ENCODE measurements at regions of chr14 and their contacts with region 1.

Region 1: GRCh38 chr14:61694830-61695694 is at the start of gene HIF1A:
- DNase-seq: peak; percentile 97 to 99 (median 98)
- ATAC-seq: peak; percentile 97 to 99 (median 98)
- H3K4me3 ChIP-seq: peak within 1 kb of the TSS; percentile 65 to 95 (median 89)
- H3K27ac ChIP-seq: peak within 1 kb of the TSS; percentile 93 to 99 (median 97)
- H3K4me1 ChIP-seq: peaks cover 0 to 39% (median 23%) of the 10 kb centered on the region in 12 donors
- H3K27me3 ChIP-seq: no peaks in the 10 kb centered on the region
- CTCF ChIP-seq: peak in 2 of 12 donors; percentile 23 to 24
- POLR2A ChIP-seq: peak; percentile 92 to 95
- total RNA-seq, gene HIF1A: 52.4 to 157 (median 72.8) TPM

Region 2: DNA sequence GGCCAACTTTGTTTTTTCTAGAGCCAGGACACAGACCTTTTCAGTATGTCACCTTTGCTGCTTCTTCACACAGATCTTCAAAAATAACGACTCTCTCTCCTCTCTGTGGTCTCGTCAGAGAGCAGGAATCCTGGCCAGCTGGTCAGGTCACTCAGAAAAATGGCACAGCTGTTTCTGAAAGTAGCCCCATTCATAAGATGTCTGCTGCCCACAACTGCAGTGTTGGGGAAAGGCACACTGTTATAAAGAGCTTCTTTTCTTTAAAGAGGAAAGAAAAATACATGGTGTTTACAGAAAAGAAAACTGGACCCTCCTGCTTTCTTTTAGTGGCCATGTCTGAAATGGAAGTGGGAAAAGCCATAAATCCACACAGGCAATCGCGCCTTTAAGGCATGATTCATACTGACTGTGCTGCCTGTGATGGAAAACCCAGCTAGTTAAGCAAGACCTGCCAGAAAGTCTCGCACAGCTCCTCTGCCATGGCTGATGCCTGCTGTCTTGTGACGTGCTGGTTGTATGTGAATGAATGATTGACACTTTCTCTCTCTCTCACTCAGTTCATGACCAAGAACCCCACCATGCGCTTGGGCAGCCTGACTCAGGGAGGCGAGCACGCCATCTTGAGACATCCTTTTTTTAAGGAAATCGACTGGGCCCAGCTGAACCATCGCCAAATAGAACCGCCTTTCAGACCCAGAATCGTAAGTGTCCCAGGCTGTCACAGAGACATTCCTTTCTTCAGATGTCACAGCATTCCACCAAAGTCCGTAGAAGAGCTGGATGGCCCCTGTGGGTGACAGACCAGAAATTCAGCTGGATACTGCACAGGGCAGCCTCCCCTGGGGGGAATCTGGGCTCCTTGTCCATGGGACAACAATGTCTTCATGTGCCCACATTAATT is 147.6 kb before region 1 on chr14:
- intact Hi-C with region 1: no loop called
- DNase-seq: peak in 1 of 5 donors; percentile 40
- ATAC-seq: peak in 1 of 4 donors; percentile 32
- H3K4me3 ChIP-seq: no peak overlapping the region
- H3K27ac ChIP-seq: peak overlapping the region in 4 of 12 donors; percentile 1 to 48 (median 43)
- H3K4me1 ChIP-seq: peaks cover 6 to 84% (median 47%) of the 10 kb centered on the region in 12 donors
- H3K27me3 ChIP-seq: no peaks in the 10 kb centered on the region
- CTCF ChIP-seq: no peak
- POLR2A ChIP-seq: no peak

Region 3: DNA sequence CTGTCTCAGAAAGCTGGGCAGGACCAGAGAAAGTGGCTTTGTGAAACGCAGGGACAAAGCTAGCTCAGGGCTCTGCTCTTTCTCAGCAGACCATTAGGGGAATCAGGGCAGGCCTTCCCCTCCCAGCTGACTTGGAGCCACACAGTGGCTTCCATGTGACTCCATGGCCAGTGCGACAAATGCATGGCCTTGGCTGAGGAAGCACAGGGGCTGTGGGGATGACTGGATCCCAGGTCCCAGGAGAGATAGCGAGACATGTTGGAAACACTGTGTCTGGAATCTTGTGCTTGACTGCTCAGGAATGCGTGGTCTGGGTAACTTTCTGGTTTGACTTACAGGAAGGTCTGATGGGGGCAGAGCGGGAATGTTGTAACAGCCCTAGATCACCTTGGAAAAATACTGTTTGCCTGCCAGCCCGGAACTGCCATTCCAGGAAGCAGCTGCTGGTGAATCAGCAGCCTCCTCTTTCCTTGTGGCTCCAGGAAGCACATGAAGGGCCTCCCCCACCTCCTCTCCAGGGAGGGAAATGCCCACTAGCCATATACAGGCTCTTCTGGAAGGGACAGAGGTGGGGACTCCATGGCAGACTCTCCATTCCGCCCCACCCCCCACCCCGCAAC is 133.3 kb before region 1 on chr14:
- intact Hi-C with region 1: loop called in 5 of 10 experiments (anchors 5 to 10 kb)
- DNase-seq: peak; percentile 66 to 87 (median 73)
- ATAC-seq: peak; percentile 52 to 90 (median 80)
- H3K4me3 ChIP-seq: no peak overlapping the region
- H3K27ac ChIP-seq: peak overlapping the region; percentile 31 to 94 (median 76)
- H3K4me1 ChIP-seq: peaks cover 2 to 67% (median 32%) of the 10 kb centered on the region in 12 donors
- H3K27me3 ChIP-seq: no peaks in the 10 kb centered on the region
- CTCF ChIP-seq: peak in 1 of 12 donors; percentile 7
- POLR2A ChIP-seq: no peak

Region 4: DNA sequence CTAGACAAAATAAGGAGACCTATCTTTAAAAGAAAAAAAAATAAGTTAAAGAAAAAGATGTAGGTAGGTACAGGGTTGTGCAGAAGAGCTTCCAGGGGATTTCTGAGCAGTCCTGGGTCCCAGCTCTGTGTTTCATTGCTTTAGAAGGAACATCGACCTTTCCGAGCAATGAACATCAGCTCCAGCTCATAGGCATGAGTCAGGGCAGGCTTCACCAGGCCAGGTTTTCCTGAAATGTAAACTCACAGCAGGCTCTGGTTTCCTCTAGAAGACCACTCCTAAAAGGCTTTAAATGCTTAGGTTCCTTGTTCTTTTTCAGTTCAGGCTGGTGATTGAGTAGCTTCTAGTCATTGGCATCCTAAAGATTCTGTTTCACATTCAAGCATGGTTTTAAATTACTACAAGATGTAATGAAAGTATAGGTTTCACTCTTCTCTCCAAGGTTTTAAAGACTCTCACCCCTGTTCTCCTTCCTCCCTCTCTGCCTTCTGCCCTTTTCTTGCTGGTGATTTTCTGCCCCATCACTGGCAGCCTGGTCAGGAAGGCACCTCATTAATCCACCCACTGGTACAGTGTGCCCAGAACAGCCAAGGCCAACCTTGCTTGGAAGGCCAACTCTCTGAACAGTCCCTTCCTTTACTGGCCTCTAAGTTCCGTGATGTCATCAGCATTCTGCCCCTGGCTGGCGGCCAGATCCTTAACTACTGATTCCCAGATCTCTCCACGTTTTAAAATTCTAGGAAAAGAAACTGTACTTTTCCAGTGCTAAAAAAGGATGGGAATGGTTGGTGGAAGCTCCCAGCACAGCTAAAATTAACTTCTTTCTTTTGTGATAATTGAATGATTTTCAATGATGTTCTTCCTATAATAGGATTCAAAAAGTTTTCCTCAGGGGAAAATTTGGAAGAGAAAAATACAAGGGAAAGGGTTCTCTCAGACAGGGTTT is 109.2 kb before region 1 on chr14:
- intact Hi-C with region 1: loop called in 3 of 10 experiments (anchors 10 kb)
- DNase-seq: peak; percentile 78 to 84 (median 81)
- ATAC-seq: peak; percentile 83 to 89 (median 86)
- H3K4me3 ChIP-seq: no peak overlapping the region
- H3K27ac ChIP-seq: peak overlapping the region; percentile 49 to 88 (median 65)
- H3K4me1 ChIP-seq: peaks cover 8 to 71% (median 32%) of the 10 kb centered on the region in 12 donors
- H3K27me3 ChIP-seq: no peaks in the 10 kb centered on the region
- CTCF ChIP-seq: no peak
- POLR2A ChIP-seq: no peak

Region 5: DNA sequence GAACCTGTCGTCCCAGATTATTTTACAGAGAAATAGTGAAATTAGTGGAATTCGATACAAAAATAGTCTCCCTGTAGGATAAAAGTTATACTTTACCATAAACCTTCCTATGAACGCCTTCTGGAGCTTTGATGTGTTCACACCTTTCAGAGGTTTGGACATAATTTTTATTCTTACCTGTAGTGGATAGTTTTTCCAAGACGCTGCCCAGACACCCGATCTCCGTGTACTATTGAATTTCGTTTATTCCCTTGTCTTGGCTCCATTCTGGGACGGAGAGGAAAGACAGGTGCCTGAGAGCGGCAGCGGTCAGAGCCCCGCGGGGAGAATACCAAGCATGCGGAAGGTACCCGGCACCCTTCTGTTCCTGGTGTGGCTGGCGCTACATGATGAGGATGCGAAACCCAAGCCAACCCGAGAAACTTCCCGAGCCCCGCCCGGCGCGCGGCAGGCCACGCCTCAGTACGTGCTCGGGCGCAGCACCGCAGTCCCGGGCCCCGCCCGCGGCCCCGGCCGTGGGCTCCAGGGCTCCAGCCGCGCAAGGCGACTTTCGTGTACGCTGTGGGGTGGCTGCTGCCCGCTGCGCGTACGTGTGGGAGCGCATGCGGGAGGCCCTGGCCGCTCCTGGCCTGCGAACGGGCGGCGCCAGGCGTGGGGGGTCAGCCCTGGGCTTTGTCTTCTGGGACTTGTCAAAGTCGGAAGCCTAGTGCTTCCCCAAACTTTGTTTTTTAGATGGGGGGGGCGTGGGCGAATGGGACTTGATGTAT is 55.8 kb after region 1 on chr14:
- intact Hi-C with region 1: loop called in 1 of 10 experiments (anchors 5 kb)
- DNase-seq: peak; percentile 89 to 94 (median 91)
- ATAC-seq: peak; percentile 95 to 98 (median 97)
- H3K4me3 ChIP-seq: peak overlapping the region; percentile 37 to 73 (median 65)
- H3K27ac ChIP-seq: peak overlapping the region; percentile 65 to 94 (median 92)
- H3K4me1 ChIP-seq: peaks cover 0 to 53% (median 22%) of the 10 kb centered on the region in 12 donors
- H3K27me3 ChIP-seq: no peaks in the 10 kb centered on the region
- CTCF ChIP-seq: no peak
- POLR2A ChIP-seq: peak in 1 of 2 donors; percentile 88

Measured in heart left ventricle (tissue), 16 donors.